Posterior vena cava (tissue), 2 donors: ENCODE measurements at regions of chr3 and their contacts with region 1.

Region 1: GRCh38 chr3:134134240-134134639 is 104.5 kb upstream of the SLCO2A1 start:
- DNase-seq: no peak

Region 2: GRCh38 chr3:133763797-133764683 is 370.2 kb before region 1 on chr3:
- intact Hi-C with region 1: no loop called
- DNase-seq: no peak

Region 3: DNA sequence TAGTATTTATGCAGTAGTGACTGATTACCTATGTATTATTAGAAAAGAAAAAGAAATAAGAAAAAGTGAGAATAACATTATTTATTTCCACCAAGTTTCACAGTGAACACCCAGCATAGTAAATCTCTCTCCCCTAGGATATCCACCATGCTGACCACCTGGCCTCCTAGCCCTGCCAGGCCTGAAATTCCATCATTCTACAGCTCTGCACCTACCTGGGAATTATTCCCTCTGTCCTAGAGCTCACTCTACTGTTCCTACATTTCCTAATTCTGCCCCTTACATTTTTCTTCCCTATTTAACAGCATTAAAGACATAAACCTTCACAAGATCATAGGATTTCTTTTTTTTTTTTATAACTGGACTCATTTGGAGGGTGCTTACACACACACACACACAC is 1306.0 kb after region 1 on chr3:
- intact Hi-C with region 1: loop called in 1 of 2 experiments (anchors 5 kb)
- DNase-seq: no peak